HepG2 (cell line): ENCODE measurements at regions of chr4 and their contacts with region 1.

Region 1: GRCh38 chr4:187606581-187606980 is 389.0 kb upstream of the ZFP42 start:
- DNase-seq: peak; percentile 50
- ATAC-seq: peak; percentile 84
- H3K4me3 ChIP-seq: no peak overlapping the region
- H3K27ac ChIP-seq: no peak overlapping the region
- H3K4me1 ChIP-seq: no peaks in the 10 kb centered on the region
- H3K27me3 ChIP-seq: peaks cover 0 to 3% of the 10 kb centered on the region in 2 experiments; a peak in 2 of 5 replicates
- CTCF ChIP-seq: peak; percentile 84
- EP300 ChIP-seq: no peak
- POLR2A ChIP-seq: no peak
- RAD21 ChIP-seq: peak; percentile 48; the same call in 1 of the 2 replicates

Region 2: GRCh38 chr4:186936496-186937375 is 669.8 kb before region 1 on chr4:
- CTCF ChIA-PET with region 1: no interaction called
- POLR2A ChIA-PET with region 1: no interaction called
- in situ Hi-C with region 1: no loop called
- intact Hi-C with region 1: no loop called
- DNase-seq: peak; percentile 95
- ATAC-seq: peak; percentile 87
- H3K4me3 ChIP-seq: peak overlapping the region; percentile 33 to 55 (median 51); a peak in 5 of 6 replicates
- H3K27ac ChIP-seq: peak overlapping the region; percentile 88
- H3K4me1 ChIP-seq: peaks cover 81% of the 10 kb centered on the region
- H3K27me3 ChIP-seq: no peaks in the 10 kb centered on the region
- CTCF ChIP-seq: peak; percentile 31
- EP300 ChIP-seq: peak; percentile 70 to 82; a peak in 3 of 4 replicates
- POLR2A ChIP-seq: no peak
- RAD21 ChIP-seq: no peak

Region 3: DNA sequence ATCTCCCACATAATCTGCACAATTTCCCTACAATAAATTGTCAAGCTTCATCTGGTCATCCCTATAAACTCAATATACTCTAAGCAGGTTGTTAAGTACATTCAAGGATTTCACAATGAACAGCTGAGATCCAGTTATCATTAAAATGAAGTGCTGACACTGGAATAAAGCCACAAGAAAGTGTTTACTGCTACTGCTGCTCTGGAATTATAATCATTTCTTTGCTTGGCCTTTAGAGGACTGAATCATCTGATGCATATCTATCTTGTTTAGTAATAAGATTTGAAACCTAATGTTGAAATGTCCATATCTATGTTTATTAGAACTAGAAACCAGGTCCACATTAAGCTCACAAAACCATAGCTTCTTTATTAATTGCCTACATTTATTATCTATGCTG is 50.4 kb after region 1 on chr4:
- CTCF ChIA-PET with region 1: no interaction called
- POLR2A ChIA-PET with region 1: no interaction called
- in situ Hi-C with region 1: no loop called
- intact Hi-C with region 1: no loop called
- DNase-seq: no peak
- ATAC-seq: no peak
- H3K4me3 ChIP-seq: no peak overlapping the region
- H3K27ac ChIP-seq: no peak overlapping the region
- H3K4me1 ChIP-seq: no peaks in the 10 kb centered on the region
- H3K27me3 ChIP-seq: no peaks in the 10 kb centered on the region
- CTCF ChIP-seq: no peak
- EP300 ChIP-seq: no peak
- POLR2A ChIP-seq: no peak
- RAD21 ChIP-seq: no peak

Region 4: DNA sequence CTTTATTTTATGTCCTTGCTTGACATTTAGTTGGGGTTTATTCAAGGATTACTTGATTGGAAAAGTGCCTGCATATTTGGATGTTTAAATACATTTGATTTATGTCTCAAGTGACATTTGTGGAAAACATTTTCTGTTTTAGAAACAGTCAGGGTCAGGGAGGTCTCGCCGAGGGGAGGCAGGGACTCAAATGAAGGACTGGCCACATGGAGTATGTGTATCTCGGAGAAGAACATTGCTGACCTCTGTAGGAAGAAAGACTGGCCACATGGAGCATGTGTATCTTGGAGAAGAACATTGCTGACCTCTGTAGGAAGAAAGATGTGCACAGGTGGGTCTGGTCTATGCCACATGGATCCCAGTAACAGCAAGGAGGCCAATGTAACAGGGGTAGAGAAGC is 766.2 kb after region 1 on chr4:
- CTCF ChIA-PET with region 1: no interaction called
- POLR2A ChIA-PET with region 1: no interaction called
- in situ Hi-C with region 1: no loop called
- intact Hi-C with region 1: loop called (anchors 5 kb)
- DNase-seq: peak; percentile 25
- ATAC-seq: peak; percentile 87
- H3K4me3 ChIP-seq: no peak overlapping the region
- H3K27ac ChIP-seq: no peak overlapping the region
- H3K4me1 ChIP-seq: no peaks in the 10 kb centered on the region
- H3K27me3 ChIP-seq: peaks cover 0 to 3% of the 10 kb centered on the region in 2 experiments; a peak in 1 of 5 replicates
- CTCF ChIP-seq: peak; percentile 33
- EP300 ChIP-seq: no peak
- POLR2A ChIP-seq: no peak
- RAD21 ChIP-seq: no peak

Region 5: DNA sequence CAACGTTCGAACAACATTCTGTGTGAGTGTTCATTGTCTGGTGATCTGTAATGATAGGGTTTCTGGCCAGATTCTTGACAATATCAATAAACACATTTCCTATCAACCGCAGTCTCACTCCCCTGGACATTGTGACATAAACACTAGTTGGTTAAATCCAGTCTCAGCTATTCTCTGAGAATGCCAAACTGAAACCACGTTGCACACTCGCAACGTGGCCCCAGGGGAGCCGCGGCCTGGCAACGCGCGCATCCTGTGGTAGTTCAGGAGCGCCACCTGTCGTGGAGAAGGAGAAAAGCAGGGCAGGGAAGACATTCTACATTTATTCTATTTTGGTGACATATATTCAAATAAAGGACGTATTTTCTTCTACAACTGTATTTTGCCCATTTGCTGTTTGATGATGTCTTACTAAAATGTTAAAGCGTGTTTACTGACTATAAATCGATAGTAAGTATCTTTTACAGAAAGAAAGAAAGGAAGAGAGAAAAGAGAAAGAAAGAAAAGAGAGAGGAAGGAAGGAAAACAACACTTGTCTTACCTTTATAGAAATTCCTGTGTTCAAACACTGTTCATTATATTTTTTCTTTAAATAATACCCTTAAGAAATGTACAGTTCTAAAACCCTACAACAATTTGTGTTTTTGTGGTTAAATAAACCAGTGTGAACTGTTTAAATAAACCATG is 1595.7 kb after region 1 on chr4:
- CTCF ChIA-PET with region 1: interaction called, 12 read pairs
- POLR2A ChIA-PET with region 1: no interaction called
- in situ Hi-C with region 1: no loop called
- intact Hi-C with region 1: no loop called
- DNase-seq: peak; percentile 9
- ATAC-seq: peak; percentile 87
- H3K4me3 ChIP-seq: no peak overlapping the region
- H3K27ac ChIP-seq: no peak overlapping the region
- H3K4me1 ChIP-seq: no peaks in the 10 kb centered on the region
- H3K27me3 ChIP-seq: 0 out of 5 replicates have a peak, but pooled peaks cover 0 to 4% of the 10 kb centered on the region in 2 experiments
- CTCF ChIP-seq: peak; percentile 88
- EP300 ChIP-seq: no peak
- POLR2A ChIP-seq: no peak
- RAD21 ChIP-seq: peak; percentile 50; the same call in 1 of the 2 replicates

Region 6: DNA sequence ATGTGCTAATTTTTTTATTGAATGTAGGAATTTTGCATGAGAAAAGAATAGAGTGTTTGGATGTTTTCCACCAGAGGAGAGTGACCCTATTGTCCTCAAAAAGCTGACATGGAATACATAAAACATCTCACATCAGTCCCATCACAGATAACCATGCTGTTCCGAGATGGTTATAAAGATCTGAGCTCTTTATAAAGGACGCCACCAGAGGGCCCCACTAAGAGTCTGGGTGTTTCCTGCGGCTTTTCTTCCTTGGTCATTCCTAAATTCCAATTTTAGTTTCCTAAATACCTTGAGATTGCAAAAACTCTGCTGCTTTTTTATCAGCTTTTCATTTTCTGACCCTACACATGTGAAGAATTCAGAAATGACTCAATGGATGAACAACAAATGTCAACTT is 1829.6 kb after region 1 on chr4:
- CTCF ChIA-PET with region 1: no interaction called
- POLR2A ChIA-PET with region 1: no interaction called
- in situ Hi-C with region 1: no loop called
- intact Hi-C with region 1: loop called (anchors 5 kb)
- DNase-seq: peak; percentile 6
- ATAC-seq: peak; percentile 64
- H3K4me3 ChIP-seq: no peak overlapping the region
- H3K27ac ChIP-seq: no peak overlapping the region
- H3K4me1 ChIP-seq: no peaks in the 10 kb centered on the region
- H3K27me3 ChIP-seq: peaks cover 0 to 6% of the 10 kb centered on the region in 2 experiments; a peak in 2 of 5 replicates
- CTCF ChIP-seq: peak; percentile 36; the same call in 1 of the 2 replicates
- EP300 ChIP-seq: no peak
- POLR2A ChIP-seq: no peak
- RAD21 ChIP-seq: no peak